ENCODE measurements at regions of chr5 and their contacts with region 1.

Region 1: GRCh38 chr5:52915176-52915875 is 73.8 kb upstream of the ITGA2 start:
- DNase-seq: peak; percentile 88
- H3K4me3 ChIP-seq: peak overlapping the region in 2 of 3 experiments; percentile 12 to 46
- H3K27ac ChIP-seq: no peak overlapping the region
- H3K4me1 ChIP-seq: peaks cover 7% of the 10 kb centered on the region
- H3K27me3 ChIP-seq: no peaks in the 10 kb centered on the region
- CTCF ChIP-seq: peak; percentile 53 to 58
- POLR2A ChIP-seq: no peak

Region 2: GRCh38 chr5:52665559-52665958 is 249.8 kb before region 1 on chr5:
- CTCF ChIA-PET with region 1: interaction called, 14 read pairs
- POLR2A ChIA-PET with region 1: no interaction called
- dilution Hi-C with region 1: no loop called
- intact Hi-C with region 1: no loop called
- DNase-seq: peak; percentile 33
- H3K4me3 ChIP-seq: no peak overlapping the region
- H3K27ac ChIP-seq: no peak overlapping the region
- H3K4me1 ChIP-seq: no peaks in the 10 kb centered on the region
- H3K27me3 ChIP-seq: no peaks in the 10 kb centered on the region
- CTCF ChIP-seq: no peak
- POLR2A ChIP-seq: no peak

Region 3: GRCh38 chr5:52725065-52725746 is 190.1 kb before region 1 on chr5:
- CTCF ChIA-PET with region 1: interaction called, 14 read pairs
- POLR2A ChIA-PET with region 1: no interaction called
- dilution Hi-C with region 1: no loop called
- intact Hi-C with region 1: no loop called
- DNase-seq: no peak
- H3K4me3 ChIP-seq: no peak overlapping the region
- H3K27ac ChIP-seq: peak overlapping the region; percentile 34
- H3K4me1 ChIP-seq: peaks cover 34% of the 10 kb centered on the region
- H3K27me3 ChIP-seq: no peaks in the 10 kb centered on the region
- CTCF ChIP-seq: no peak
- POLR2A ChIP-seq: no peak

Region 4: DNA sequence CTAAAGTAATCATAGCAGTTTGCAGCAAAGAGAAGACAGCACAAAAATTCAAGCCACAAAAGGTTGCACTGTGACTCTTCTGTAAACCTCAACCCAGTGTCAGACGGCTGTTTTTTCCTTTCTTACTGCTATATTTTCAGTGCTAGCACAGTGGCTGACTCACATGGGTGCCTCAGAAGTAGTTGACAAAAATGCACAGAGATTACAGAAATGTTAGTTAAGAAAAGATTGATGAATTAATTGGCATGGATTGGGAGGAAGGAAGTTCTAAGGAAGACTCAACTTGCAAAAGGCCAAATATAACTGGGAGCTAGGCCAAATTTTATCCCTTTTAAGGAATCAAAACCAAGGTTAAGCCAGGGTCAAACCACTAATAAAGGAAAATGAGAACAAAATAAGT is 171.4 kb before region 1 on chr5:
- CTCF ChIA-PET with region 1: no interaction called
- POLR2A ChIA-PET with region 1: no interaction called
- dilution Hi-C with region 1: no loop called
- intact Hi-C with region 1: loop called (anchors 1 kb)
- DNase-seq: peak; percentile 88
- H3K4me3 ChIP-seq: no peak overlapping the region
- H3K27ac ChIP-seq: peak overlapping the region; percentile 70
- H3K4me1 ChIP-seq: peaks cover 28% of the 10 kb centered on the region
- H3K27me3 ChIP-seq: no peaks in the 10 kb centered on the region
- CTCF ChIP-seq: no peak
- POLR2A ChIP-seq: no peak

Region 5: GRCh38 chr5:52776116-52776515 is 139.2 kb before region 1 on chr5:
- CTCF ChIA-PET with region 1: no interaction called
- POLR2A ChIA-PET with region 1: no interaction called
- dilution Hi-C with region 1: no loop called
- intact Hi-C with region 1: no loop called
- DNase-seq: no peak
- H3K4me3 ChIP-seq: no peak overlapping the region
- H3K27ac ChIP-seq: no peak overlapping the region
- H3K4me1 ChIP-seq: no peaks in the 10 kb centered on the region
- H3K27me3 ChIP-seq: no peaks in the 10 kb centered on the region
- CTCF ChIP-seq: no peak
- POLR2A ChIP-seq: no peak

Region 6: GRCh38 chr5:52787600-52788504 is 127.5 kb before region 1 on chr5 and contains the starts of genes ITGA1 and PELO:
- CTCF ChIA-PET with region 1: interaction called, 20 read pairs
- POLR2A ChIA-PET with region 1: no interaction called
- dilution Hi-C with region 1: no loop called
- intact Hi-C with region 1: loop called (anchors 1 kb)
- DNase-seq: peak; percentile 77
- H3K4me3 ChIP-seq: peak within 1 kb of the TSS; percentile 35 to 80 (median 62)
- H3K27ac ChIP-seq: peak within 1 kb of the TSS; percentile 19
- H3K4me1 ChIP-seq: peaks cover 11% of the 10 kb centered on the region
- H3K27me3 ChIP-seq: no peaks in the 10 kb centered on the region
- CTCF ChIP-seq: peak; percentile 16 to 51
- POLR2A ChIP-seq: no peak
- total RNA-seq, gene ITGA1: 1.9 and 3.3 TPM in 2 replicates
- total RNA-seq, gene PELO: 10.2 and 13.2 TPM in 2 replicates

Region 7: GRCh38 chr5:52943285-52943684 is 28.0 kb after region 1 on chr5:
- CTCF ChIA-PET with region 1: interaction called, 15 read pairs
- POLR2A ChIA-PET with region 1: no interaction called
- dilution Hi-C with region 1: no loop called
- intact Hi-C with region 1: no loop called
- DNase-seq: peak; percentile 31
- H3K4me3 ChIP-seq: no peak overlapping the region
- H3K27ac ChIP-seq: no peak overlapping the region
- H3K4me1 ChIP-seq: peaks cover 26% of the 10 kb centered on the region
- H3K27me3 ChIP-seq: no peaks in the 10 kb centered on the region
- CTCF ChIP-seq: peak; percentile 23 to 44
- POLR2A ChIP-seq: no peak

Region 8: DNA sequence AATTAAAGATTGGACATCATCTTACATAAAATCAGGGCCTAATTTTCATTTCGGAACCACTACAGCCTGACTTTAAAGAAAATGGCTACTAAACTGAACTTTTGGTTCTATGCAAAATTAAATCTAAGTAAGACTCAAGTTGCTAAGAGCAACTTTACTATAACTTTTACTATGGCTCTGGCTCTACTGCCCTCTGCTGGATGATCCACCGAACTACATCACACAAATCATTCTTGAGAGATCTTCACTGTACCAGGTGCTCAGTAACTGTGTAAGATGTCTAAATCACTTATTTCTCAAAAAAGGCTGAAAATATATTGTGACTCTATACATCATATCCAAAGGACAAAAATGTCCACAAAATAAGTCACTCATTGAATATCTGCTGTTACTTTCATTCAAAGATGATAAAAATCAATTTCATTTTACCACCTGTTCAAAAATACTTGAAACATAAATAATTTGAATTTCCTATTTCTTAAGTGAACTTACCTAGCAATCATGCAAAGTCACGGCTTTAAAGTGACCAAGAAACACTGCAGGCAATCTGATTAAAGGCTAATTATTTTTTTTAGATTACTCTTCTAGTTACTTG is 180.7 kb after region 1 on chr5:
- CTCF ChIA-PET with region 1: interaction called, 6 read pairs
- POLR2A ChIA-PET with region 1: no interaction called
- dilution Hi-C with region 1: no loop called
- intact Hi-C with region 1: loop called (anchors 1 kb)
- DNase-seq: peak; percentile 85
- H3K4me3 ChIP-seq: no peak overlapping the region
- H3K27ac ChIP-seq: no peak overlapping the region
- H3K4me1 ChIP-seq: peaks cover 10% of the 10 kb centered on the region
- H3K27me3 ChIP-seq: no peaks in the 10 kb centered on the region
- CTCF ChIP-seq: peak; percentile 54 to 63
- POLR2A ChIP-seq: no peak

Region 9: DNA sequence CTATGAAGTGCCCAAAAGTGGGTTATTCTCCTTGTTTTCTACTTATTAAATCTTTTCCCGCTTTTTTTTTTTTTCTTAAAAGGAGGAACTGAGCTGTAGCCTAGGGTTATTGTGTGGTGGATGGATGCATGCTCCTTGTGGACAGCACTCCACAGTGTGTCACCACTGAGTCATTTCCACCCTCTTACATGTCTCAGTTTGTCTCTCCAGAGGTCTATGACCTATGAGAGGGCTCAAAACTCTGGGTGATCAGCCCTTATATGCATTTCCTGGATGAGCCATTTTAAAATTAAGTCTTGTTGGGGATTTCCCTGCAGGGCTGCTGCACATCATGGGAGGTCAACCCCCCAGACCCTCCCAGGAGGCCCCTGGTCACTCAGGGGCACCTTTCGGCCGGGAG is 296.5 kb after region 1 on chr5:
- CTCF ChIA-PET with region 1: no interaction called
- POLR2A ChIA-PET with region 1: no interaction called
- dilution Hi-C with region 1: no loop called
- intact Hi-C with region 1: no loop called
- DNase-seq: peak; percentile 34
- H3K4me3 ChIP-seq: no peak overlapping the region
- H3K27ac ChIP-seq: no peak overlapping the region
- H3K4me1 ChIP-seq: no peaks in the 10 kb centered on the region
- H3K27me3 ChIP-seq: no peaks in the 10 kb centered on the region
- CTCF ChIP-seq: no peak
- POLR2A ChIP-seq: no peak

Measured in endothelial cell of umbilical vein (primary cell).